ENCODE measurements at regions of chr6 and their contacts with region 1.

Region 1: DNA sequence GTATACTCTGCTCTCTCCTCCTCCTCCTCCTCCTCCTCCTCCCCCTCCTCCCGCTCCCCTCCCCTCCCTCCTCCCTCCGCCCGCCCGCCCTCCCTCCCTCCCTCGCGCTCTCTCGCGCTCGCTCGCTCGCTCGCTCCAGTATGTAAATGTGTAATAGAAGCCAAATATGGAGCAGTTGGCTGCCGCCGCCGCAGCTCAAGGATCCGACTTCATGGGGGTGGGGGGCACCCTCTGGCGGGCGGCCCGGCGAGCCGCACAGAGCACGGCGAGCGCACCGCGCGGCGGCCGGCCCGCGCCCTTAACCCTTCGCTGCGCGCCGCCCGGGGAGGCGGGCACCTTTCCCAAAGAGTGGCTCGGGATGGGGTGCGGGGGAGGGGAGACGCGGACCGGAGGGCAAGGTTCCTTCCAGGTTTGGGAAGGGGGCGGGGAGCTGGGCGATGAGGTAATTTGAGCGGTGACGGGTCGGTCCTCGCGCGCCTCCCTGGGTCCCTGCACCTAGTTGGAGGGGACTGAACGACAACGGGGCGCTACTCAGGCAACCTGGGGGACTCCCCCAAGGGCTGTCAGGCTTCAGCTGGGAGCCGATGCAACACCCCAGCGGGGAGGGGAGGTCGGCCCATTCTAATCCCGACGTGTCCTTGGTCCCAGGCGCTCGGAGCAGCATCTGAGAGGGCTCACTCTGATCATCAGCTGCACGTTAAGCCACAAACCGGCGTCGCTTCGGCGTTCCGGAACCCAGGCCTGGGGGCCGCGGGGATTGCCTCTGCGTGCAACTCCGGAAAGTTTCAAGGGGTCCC is 409 bp upstream of the ATXN1 start:
- DNase-seq: peak; percentile 82 to 93
- ATAC-seq: peak; percentile 63 to 71 (median 69)
- H3K4me3 ChIP-seq: peak overlapping the region; percentile 94
- H3K27ac ChIP-seq: peak overlapping the region; percentile 99
- H3K4me1 ChIP-seq: peaks cover 41% of the 10 kb centered on the region
- H3K27me3 ChIP-seq: no peaks in the 10 kb centered on the region
- CTCF ChIP-seq: peak; percentile 10

Region 2: DNA sequence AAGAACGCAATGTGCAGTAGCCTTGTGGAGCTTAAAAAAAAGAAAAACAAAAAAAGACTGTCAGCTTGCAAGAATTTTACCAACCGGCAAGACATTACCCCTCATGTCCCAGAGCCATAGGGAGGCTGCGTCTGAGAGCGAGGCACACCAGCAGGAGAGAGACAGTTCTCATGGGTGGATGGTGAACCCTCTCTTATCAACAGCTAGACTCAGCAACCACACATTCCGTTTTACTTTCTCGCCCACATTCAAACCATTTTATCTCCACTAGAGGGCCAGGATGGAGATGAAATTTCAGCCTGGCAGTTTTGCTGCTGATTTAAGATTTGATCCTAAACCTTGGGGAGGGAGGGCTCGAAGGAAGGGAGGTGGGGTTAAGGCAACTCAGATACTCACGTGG is 247.4 kb before region 1 on chr6:
- intact Hi-C with region 1: loop called in 1 of 2 experiments (anchors 5 kb)
- DNase-seq: no peak
- ATAC-seq: peak in 3 of 4 donors; percentile 22 to 75 (median 53)
- H3K4me3 ChIP-seq: no peak overlapping the region
- H3K27ac ChIP-seq: no peak overlapping the region
- H3K4me1 ChIP-seq: peaks cover 30% of the 10 kb centered on the region
- H3K27me3 ChIP-seq: no peaks in the 10 kb centered on the region
- CTCF ChIP-seq: peak; percentile 53

Region 3: DNA sequence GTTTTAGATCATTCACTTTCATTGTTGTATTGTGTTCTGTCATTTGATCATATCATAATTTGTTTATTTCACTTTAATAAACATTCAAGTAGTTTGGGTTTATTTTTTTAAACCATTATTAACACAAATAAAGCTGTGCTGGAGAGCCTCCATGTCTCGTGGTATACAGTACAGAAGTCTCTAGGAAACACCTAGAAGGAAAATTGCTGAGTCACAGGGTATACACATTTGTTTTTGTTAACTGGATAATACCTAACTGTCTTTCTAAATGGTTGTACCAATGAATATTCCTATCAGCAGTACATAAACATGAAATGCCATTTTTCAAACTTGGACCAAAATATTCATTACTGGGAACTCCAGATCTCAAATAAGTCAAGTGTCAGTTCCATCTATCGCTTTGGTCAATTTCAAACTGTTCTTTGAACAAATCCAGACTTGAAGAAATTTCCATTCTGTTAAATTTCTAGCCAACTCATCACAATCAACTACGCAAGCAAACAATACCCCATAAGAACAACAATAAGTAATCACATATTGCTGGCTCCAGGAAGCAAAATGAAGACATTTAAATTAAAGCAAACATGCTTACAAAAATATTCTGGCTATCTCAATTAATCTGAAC is 138.5 kb before region 1 on chr6:
- intact Hi-C with region 1: no loop called
- DNase-seq: no peak
- ATAC-seq: no peak
- H3K4me3 ChIP-seq: no peak overlapping the region
- H3K27ac ChIP-seq: peak overlapping the region; percentile 5
- H3K4me1 ChIP-seq: peaks cover 21% of the 10 kb centered on the region
- H3K27me3 ChIP-seq: no peaks in the 10 kb centered on the region
- CTCF ChIP-seq: no peak

Region 4: GRCh38 chr6:16684896-16685554 is 76.6 kb before region 1 on chr6:
- intact Hi-C with region 1: loop called (anchors 5 kb)
- DNase-seq: no peak
- ATAC-seq: no peak
- H3K4me3 ChIP-seq: no peak overlapping the region
- H3K27ac ChIP-seq: no peak overlapping the region
- H3K4me1 ChIP-seq: peaks cover 67% of the 10 kb centered on the region
- H3K27me3 ChIP-seq: no peaks in the 10 kb centered on the region
- CTCF ChIP-seq: no peak

Region 5: GRCh38 chr6:16816891-16817290 is 55.2 kb after region 1 on chr6:
- intact Hi-C with region 1: no loop called
- DNase-seq: no peak
- ATAC-seq: no peak
- H3K4me3 ChIP-seq: no peak overlapping the region
- H3K27ac ChIP-seq: no peak overlapping the region
- H3K4me1 ChIP-seq: no peaks in the 10 kb centered on the region
- H3K27me3 ChIP-seq: no peaks in the 10 kb centered on the region
- CTCF ChIP-seq: no peak

Region 6: DNA sequence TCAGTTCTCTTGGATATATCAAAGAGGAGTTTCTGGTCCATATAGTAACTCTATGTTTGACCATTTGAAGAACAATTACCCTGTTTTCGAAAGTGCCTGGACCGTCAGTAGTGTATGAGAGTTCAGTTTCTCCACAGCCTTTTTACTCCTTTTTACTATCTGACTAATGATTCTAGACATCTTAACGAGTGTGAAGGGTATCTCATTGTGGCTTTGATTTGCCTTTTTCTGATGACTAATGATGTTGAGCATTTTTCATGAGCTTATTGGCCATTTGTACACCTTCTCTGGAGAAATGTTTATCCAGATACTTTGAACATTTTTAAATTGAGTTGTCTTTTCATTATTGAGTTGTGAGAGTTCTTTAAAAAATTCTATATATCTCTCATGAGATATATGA is 114.5 kb after region 1 on chr6:
- intact Hi-C with region 1: no loop called
- DNase-seq: no peak
- ATAC-seq: no peak
- H3K4me3 ChIP-seq: no peak overlapping the region
- H3K27ac ChIP-seq: no peak overlapping the region
- H3K4me1 ChIP-seq: no peaks in the 10 kb centered on the region
- H3K27me3 ChIP-seq: peaks cover 0 to 2% (median 0%) of the 10 kb centered on the region in 3 donors
- CTCF ChIP-seq: no peak

Region 7: DNA sequence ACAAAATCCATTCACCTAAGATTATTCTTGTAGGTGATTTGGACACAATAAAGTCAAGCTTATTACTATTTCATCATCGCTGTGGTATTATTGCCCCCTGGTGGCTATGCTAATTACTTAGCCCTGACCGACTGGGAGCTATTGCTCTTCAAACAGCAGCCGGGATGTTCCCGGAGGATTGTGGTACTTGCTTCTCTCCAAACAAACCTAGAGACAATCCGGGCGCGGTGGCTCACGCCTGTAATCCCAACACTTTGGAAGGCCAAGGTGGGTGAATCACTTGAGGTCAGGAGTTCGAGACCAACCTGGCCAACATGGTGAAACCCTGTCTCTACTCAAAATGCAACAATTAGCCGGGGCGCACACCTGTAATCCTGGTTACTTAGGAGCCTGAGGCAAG is 324.8 kb after region 1 on chr6:
- intact Hi-C with region 1: loop called in 1 of 2 experiments (anchors 10 kb)
- DNase-seq: no peak
- ATAC-seq: peak; percentile 53 to 72 (median 64)
- H3K4me3 ChIP-seq: no peak overlapping the region
- H3K27ac ChIP-seq: no peak overlapping the region
- H3K4me1 ChIP-seq: no peaks in the 10 kb centered on the region
- H3K27me3 ChIP-seq: no peaks in the 10 kb centered on the region
- CTCF ChIP-seq: peak; percentile 62